Aorta (tissue), 5 donors: ENCODE measurements at regions of chr6 and their contacts with region 1.

Region 1: GRCh38 chr6:36027501-36028087 is at the start of gene MAPK14:
- DNase-seq: peak; percentile 99
- ATAC-seq: peak; percentile 97
- H3K4me3 ChIP-seq: peak within 1 kb of the TSS; percentile 46 to 65
- H3K27ac ChIP-seq: peak within 1 kb of the TSS; percentile 45
- H3K4me1 ChIP-seq: peaks cover 0 to 2% of the 10 kb centered on the region in 2 donors
- H3K27me3 ChIP-seq: no peaks in the 10 kb centered on the region
- total RNA-seq, gene MAPK14: 52.6 to 62.0 TPM

Region 2: DNA sequence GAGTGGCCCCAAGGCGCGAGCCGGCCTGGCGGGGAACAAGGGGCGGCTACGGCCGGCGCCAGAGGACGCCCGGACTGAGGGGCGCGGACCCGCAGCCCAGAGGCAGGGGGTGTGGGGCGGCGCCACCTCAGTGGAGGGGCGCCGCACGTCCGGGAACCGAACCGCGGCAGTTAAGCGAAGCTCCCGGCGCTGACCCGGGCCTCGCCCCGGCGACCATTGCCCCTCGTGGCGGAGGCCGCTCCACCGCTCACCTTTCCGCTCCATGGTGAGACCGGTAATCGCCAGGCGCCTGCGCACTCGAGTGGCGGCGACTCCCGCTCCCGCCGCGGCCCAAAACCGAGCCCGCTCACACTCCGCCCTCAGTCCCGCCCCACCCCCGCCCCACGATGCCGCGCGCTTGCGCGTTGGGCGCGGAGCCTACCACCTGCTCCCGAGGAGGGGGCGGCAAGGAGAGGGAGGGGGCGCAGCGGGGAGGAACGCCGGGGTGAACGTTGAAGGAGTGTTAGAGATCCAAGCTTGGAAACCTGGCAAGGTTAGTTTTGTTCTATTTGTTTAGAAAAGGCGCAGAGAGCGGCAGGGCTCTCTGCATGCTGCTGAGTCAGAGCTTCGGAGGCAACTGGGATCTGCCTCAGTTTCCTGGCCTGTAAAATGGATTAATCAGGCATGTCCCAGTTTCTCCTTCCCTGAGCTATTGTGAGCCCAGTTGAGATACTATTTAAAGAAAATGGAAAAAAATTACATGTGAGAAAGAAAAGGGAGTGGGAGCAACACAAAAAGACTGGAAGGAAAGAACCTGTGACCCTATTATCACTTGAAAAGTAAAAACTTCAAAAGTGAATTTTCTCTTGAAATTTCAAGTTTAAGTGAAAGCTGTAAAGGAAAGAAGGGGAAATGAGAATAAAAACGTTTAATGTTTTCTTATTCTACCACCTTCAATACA is 106.5 kb before region 1 on chr6 and contains the start of gene SRPK1:
- intact Hi-C with region 1: loop called in 1 of 2 experiments (anchors 5 kb)
- DNase-seq: peak; percentile 90 to 95
- ATAC-seq: peak; percentile 94
- H3K4me3 ChIP-seq: peak within 1 kb of the TSS; percentile 73 to 74
- H3K27ac ChIP-seq: peak within 1 kb of the TSS in 1 of 2 donors; percentile 20
- H3K4me1 ChIP-seq: no peaks in the 10 kb centered on the region
- H3K27me3 ChIP-seq: no peaks in the 10 kb centered on the region
- total RNA-seq, gene SRPK1: 26.1 to 29.7 TPM

Region 3: GRCh38 chr6:36094753-36095496 is 67.3 kb after region 1 on chr6:
- intact Hi-C with region 1: loop called (anchors 1 to 2 kb)
- DNase-seq: peak; percentile 82 to 93
- ATAC-seq: peak; percentile 94
- H3K4me3 ChIP-seq: no peak overlapping the region
- H3K27ac ChIP-seq: peak overlapping the region in 1 of 2 donors; percentile 21
- H3K4me1 ChIP-seq: no peaks in the 10 kb centered on the region
- H3K27me3 ChIP-seq: no peaks in the 10 kb centered on the region

Region 4: GRCh38 chr6:36196880-36197548 is 169.4 kb after region 1 on chr6:
- intact Hi-C with region 1: loop called (anchors 2 to 10 kb)
- DNase-seq: peak; percentile 99 to 100
- ATAC-seq: peak; percentile 99
- H3K4me3 ChIP-seq: peak overlapping the region; percentile 72 to 96
- H3K27ac ChIP-seq: peak overlapping the region; percentile 49 to 92
- H3K4me1 ChIP-seq: no peaks in the 10 kb centered on the region
- H3K27me3 ChIP-seq: no peaks in the 10 kb centered on the region